ENCODE measurements at regions of chr1 and their contacts with region 1.

Region 1: DNA sequence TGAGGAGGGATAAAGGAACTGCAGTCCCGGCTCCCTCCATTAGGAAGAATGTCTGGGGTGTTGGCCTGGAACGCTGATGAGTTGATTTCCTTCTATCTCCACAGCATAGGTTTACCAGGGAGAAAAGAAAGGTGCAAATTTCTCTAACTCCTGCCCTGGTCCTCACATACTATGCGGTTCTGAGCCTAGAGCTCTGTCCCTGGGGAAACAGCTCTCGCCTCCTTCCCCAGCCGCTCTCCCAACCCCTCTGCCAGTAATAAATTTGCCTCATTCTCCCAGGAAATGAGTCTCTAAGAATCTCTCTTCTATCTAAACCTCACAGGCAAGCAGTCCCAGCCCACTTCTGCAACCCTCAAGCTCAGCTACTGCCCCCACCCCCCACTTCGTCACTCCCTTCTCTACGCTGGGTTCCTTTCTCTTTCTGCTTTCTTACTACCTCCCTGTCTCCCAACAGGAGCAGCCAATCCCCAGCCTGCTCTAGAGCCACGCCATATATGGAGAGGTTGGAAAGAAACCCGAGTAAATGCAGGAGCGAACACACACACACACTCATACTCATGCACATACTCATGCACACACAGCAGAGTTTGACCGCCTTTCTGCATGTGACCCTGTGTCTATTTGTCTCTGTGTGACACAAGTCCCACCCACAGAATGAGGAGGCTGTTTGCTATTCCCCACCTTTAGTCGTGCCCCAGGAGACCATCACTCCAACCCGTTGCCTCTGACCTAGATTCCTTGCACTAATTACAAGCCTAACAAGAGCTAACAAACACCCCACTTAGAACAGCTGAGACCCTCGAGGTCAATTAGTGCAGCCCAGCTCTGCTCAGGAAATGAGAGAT is 13.4 kb downstream of the PLEKHO1 start:
- DNase-seq: peak in 4 of 14 experiments; percentile 30 to 68 (median 48)
- ATAC-seq: peak; percentile 54
- H3K4me3 ChIP-seq: no peak overlapping the region
- H3K4me3 Mint-ChIP-seq: peak overlapping the region; percentile 8
- H3K27ac ChIP-seq: no peak overlapping the region
- H3K27ac Mint-ChIP-seq: peak overlapping the region; percentile 42
- H3K4me1 ChIP-seq: peaks cover 58% of the 10 kb centered on the region
- H3K4me1 Mint-ChIP-seq: peaks cover 49% of the 10 kb centered on the region
- H3K27me3 ChIP-seq: no peaks in the 10 kb centered on the region
- H3K27me3 Mint-ChIP-seq: no peaks in the 10 kb centered on the region
- CTCF ChIP-seq: no peak

Region 2: GRCh38 chr1:150067184-150068036 is 95.7 kb before region 1 on chr1 and contains the start of gene VPS45:
- CTCF ChIA-PET with region 1: interaction called, 77 read pairs
- POLR2A ChIA-PET with region 1: interaction called, 19 read pairs
- intact Hi-C with region 1: no loop called
- DNase-seq: peak; percentile 54 to 89 (median 72)
- ATAC-seq: peak; percentile 91
- H3K4me3 ChIP-seq: peak within 1 kb of the TSS; percentile 79
- H3K4me3 Mint-ChIP-seq: peak within 1 kb of the TSS; percentile 96
- H3K27ac ChIP-seq: peak within 1 kb of the TSS; percentile 31 to 59
- H3K27ac Mint-ChIP-seq: peak within 1 kb of the TSS; percentile 83
- H3K4me1 ChIP-seq: peaks cover 6% of the 10 kb centered on the region
- H3K4me1 Mint-ChIP-seq: peaks cover 44% of the 10 kb centered on the region
- H3K27me3 ChIP-seq: no peaks in the 10 kb centered on the region
- H3K27me3 Mint-ChIP-seq: no peaks in the 10 kb centered on the region
- CTCF ChIP-seq: no peak
- total RNA-seq, gene VPS45: 9.6 to 10.7 TPM

Region 3: GRCh38 chr1:150194381-150195031 is 31.4 kb after region 1 on chr1:
- CTCF ChIA-PET with region 1: no interaction called
- POLR2A ChIA-PET with region 1: no interaction called
- intact Hi-C with region 1: no loop called
- DNase-seq: no peak
- ATAC-seq: no peak
- H3K4me3 ChIP-seq: no peak overlapping the region
- H3K4me3 Mint-ChIP-seq: no peak overlapping the region
- H3K27ac ChIP-seq: no peak overlapping the region
- H3K27ac Mint-ChIP-seq: no peak overlapping the region
- H3K4me1 ChIP-seq: no peaks in the 10 kb centered on the region
- H3K4me1 Mint-ChIP-seq: no peaks in the 10 kb centered on the region
- H3K27me3 ChIP-seq: no peaks in the 10 kb centered on the region
- H3K27me3 Mint-ChIP-seq: peaks cover 9% of the 10 kb centered on the region
- CTCF ChIP-seq: no peak

Measured in CD4-positive, alpha-beta T cell (primary cell).